ENCODE measurements at regions of chr2 and their contacts with region 1.

Region 1: GRCh38 chr2:222318026-222318711 is 19.4 kb upstream of the PAX3 start:
- DNase-seq: peak; percentile 81

Region 2: GRCh38 chr2:222242532-222242931 is 75.6 kb before region 1 on chr2:
- intact Hi-C with region 1: loop called in 1 of 2 experiments (anchors 2 kb)
- DNase-seq: no peak

Region 3: GRCh38 chr2:222613715-222614331 is 295.7 kb after region 1 on chr2:
- intact Hi-C with region 1: loop called in 1 of 2 experiments (anchors 10 kb)
- DNase-seq: no peak